Right ventricle myocardium superior (tissue), 1 donor: ENCODE measurements at regions of chr1 and their contacts with region 1.

Region 1: DNA sequence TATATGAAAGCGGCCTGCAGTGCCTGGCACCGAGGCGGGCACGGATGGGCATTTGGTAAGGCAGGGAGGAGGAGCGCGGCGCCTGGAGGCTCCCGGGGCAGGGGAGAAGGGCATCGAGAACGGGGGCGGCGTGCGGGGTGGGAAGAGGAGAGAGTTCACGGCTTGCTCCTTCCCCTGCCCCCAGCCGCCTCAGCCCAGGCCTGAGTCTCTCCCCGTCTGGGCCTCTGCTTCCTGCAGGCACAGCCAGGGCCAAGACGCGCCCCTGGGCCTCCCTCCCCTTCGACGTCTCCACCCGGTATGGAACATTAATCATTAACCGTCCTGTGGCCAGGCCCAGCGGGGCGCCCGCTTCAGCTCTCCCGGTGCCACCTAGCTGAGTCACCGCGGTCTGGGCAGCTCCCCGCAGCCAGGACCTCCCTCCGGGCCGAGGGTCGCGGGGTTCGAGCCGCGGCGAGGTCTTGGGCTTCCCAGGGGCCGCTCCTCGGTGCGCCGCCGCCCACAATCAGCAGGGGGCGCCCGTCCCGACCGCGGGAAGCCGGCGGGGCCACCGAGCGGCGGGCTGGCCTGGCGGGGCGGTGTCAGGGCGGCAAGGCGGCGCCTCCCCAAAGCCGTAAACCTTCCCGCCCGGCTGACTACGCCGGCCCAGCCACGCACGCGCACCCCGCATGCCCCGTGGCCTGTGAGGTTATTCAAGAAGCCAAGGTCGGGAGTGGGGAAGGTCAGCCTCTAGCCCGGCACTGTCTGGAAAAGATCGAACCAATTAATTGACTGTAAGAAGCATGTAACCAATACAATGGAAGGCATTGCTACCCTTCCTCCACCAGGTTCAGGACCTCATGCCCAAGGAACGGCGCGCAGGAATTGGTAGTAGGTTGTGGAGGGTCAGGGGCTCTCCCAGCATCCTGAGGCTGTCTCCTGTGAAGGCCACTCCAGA is 23.4 kb upstream of the RD3 start:
- DNase-seq: peak; percentile 89
- ATAC-seq: peak; percentile 92

Region 2: GRCh38 chr1:211564084-211564483 is 48.7 kb after region 1 on chr1:
- intact Hi-C with region 1: loop called (anchors 5 kb)
- DNase-seq: no peak
- ATAC-seq: no peak

Region 3: DNA sequence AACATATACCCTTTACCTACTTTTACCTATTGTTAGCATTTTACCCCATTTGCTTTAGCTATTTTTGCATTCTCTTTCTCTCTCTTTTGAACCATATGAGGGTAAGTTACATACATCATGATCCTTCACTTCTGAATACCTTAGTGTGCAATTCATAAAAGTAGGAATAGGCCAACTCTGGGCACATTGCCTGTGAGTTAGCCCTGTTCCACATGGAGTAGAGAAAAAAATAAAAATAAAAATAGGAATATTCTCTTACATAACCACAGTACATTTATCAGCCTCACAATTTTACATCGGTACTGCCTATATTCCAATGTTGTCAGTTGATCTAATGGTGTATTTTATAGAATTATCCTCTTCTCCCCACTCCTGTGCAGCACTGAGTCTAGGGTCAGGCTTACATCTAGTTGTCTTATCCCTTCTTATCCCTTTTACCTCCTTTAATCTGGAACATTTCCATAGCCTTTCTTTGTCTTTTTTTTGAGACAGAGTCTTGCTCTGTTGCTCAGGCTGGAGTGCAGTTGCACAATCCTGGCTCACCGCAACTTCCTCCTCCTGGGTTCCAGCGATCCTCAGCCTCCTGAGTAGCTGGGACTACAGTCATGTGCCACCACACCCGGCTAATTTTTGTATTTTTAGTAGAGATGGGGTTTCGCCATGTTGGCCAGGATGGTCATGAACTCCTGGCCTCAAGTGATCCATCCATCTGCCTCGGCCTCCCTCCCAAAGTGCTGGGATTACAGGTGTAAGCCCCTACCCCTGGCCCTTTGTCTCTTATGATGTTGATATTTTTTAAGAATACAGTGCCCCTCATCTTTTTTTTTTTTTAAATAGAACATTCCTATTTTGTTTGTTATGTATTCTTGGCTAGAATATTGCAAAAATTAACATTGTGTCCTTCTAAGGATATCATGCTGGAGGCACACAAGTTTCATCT is 74.7 kb after region 1 on chr1:
- intact Hi-C with region 1: no loop called
- DNase-seq: peak; percentile 87
- ATAC-seq: peak; percentile 91